Calu3 (cell line): ENCODE measurements at regions of chr15 and their contacts with region 1.

Region 1: DNA sequence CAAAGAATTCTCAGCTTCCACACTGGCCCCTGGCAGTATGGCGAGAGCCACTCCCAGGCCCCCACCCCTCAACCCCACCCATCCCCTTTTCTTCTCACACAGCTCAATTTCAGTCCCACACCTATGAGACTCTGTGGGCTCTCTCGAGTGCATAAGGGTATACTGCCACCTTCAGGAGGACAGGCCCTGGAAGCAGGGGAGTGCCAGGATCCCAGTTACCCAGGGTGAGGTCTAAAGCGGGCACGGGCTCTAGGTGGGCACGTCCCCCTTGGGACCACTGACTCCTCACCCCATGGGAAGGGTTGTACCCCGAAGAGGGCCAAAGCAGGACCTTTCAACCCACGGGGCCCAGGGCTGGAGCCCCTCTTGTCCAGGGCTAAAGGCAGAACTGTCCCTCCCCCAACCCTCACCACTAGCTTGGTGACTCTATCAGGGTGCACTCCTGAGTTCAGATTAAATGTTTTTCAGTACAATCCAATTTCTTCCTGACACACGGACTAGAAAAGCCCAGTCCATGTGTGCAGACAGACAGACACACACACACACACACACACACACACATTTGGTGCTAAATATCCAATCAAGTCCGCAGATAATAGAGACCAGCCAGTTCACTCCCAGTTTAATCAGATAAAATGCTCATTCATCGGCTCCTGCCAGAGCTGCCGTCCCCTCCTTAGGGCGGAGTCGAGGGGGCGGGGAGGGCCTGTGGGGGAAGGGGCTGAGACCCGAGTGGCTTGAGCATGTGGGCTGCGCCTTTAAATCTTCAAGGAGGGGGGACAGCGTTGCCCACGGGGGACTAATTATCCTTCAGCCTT is 59.4 kb downstream of the CYP11A1 start:
- DNase-seq: peak; percentile 81
- H3K4me3 Mint-ChIP-seq: no peak overlapping the region
- H3K27ac Mint-ChIP-seq: no peak overlapping the region
- H3K4me1 Mint-ChIP-seq: peaks cover 9% of the 10 kb centered on the region
- H3K27me3 Mint-ChIP-seq: peaks cover 100% of the 10 kb centered on the region
- CTCF ChIP-seq: peak; percentile 71

Region 2: GRCh38 chr15:74053941-74054529 is 254.0 kb before region 1 on chr15:
- CTCF ChIA-PET with region 1: interaction called, 14 read pairs
- intact Hi-C with region 1: loop called (anchors 5 kb)
- DNase-seq: peak; percentile 83
- H3K4me3 Mint-ChIP-seq: no peak overlapping the region
- H3K27ac Mint-ChIP-seq: no peak overlapping the region
- H3K4me1 Mint-ChIP-seq: peaks cover 21% of the 10 kb centered on the region
- H3K27me3 Mint-ChIP-seq: peaks cover 17% of the 10 kb centered on the region
- CTCF ChIP-seq: peak; percentile 80

Region 3: DNA sequence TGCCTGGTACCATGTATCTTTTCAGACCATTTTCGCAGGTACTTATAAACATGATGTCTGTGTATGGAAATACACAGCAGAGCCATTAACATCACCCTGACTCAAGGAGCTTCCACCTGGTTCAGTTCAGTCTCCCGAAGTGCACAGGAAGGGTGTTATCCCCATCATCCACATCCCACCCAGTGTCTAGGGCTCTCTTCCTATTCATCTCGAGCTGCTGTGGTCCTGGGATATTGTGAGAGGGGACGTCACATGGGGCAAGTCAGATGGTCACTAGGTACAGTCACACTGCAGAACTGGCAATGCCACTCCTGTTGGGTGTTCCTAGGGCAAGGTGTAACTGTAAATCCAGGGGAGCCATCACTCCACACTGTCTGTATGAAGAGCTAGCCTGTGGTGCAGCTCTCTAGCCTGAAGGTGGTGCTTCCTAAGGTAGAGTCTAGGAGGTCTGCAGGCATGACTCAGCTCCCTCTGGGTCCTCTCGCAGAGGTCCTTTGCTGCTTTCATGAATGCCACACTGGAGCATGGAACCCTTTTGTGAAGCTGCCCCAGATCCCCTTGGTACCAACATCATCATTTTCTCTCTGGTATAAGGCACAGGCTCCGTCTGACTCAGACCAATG is 163.8 kb before region 1 on chr15:
- CTCF ChIA-PET with region 1: interaction called, 12 read pairs
- intact Hi-C with region 1: no loop called
- DNase-seq: peak; percentile 38
- H3K4me3 Mint-ChIP-seq: no peak overlapping the region
- H3K27ac Mint-ChIP-seq: no peak overlapping the region
- H3K4me1 Mint-ChIP-seq: no peaks in the 10 kb centered on the region
- H3K27me3 Mint-ChIP-seq: peaks cover 23% of the 10 kb centered on the region
- CTCF ChIP-seq: peak; percentile 33

Region 4: GRCh38 chr15:74202452-74203428 is 105.3 kb before region 1 on chr15 and contains the start of gene STRA6:
- CTCF ChIA-PET with region 1: interaction called, 13 read pairs
- intact Hi-C with region 1: no loop called
- DNase-seq: peak; percentile 77
- H3K4me3 Mint-ChIP-seq: peak within 1 kb of the TSS; percentile 56
- H3K27ac Mint-ChIP-seq: peak within 1 kb of the TSS; percentile 93
- H3K4me1 Mint-ChIP-seq: peaks cover 58% of the 10 kb centered on the region
- H3K27me3 Mint-ChIP-seq: no peaks in the 10 kb centered on the region
- CTCF ChIP-seq: no peak
- total RNA-seq, gene STRA6: 5.9 and 8.4 TPM in 2 replicates

Region 5: DNA sequence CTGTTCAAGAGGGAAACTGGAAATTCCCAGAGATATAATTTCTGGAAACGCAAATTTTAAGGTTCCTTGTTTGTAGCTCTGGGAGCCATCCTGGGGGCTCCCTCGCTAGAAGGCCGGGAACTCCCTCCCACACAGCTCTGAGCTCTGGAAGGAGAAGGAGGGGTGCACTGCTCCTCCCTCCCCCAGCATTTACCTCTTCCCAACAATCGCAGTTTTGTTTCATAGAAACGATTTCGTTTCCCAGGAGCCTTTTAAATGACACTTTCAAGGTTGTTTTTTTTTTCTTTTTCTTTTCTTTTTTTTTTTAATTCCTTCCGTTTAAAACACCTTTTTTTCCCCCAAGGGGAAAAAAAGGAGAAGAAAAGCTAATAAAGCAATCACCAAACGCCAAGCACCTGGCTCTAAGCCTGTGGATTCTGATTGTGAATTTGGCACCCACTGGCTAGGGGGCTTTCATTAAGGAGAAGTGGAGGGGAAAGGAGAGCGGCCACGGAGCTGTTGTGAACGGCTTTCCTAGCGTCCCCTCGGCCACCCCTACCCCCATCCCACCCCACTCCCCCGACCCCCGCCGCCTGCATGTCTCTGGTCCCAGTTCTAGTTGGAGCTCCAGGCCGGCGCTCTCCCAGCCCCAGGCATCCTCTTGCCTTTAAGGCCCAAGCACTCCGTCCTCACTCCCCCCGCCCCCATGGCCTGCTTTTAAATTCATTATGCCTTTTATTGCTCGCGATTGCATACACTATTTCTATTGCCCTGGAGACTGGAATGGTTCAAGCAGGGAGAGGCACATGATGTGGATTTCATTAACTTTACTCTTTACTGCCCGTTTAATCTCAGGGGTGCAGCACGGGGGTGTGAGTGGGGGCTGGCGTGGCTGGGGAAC is 85.6 kb before region 1 on chr15:
- CTCF ChIA-PET with region 1: no interaction called
- intact Hi-C with region 1: no loop called
- DNase-seq: no peak
- H3K4me3 Mint-ChIP-seq: no peak overlapping the region
- H3K27ac Mint-ChIP-seq: no peak overlapping the region
- H3K4me1 Mint-ChIP-seq: peaks cover 38% of the 10 kb centered on the region
- H3K27me3 Mint-ChIP-seq: peaks cover 19% of the 10 kb centered on the region
- CTCF ChIP-seq: no peak

Region 6: DNA sequence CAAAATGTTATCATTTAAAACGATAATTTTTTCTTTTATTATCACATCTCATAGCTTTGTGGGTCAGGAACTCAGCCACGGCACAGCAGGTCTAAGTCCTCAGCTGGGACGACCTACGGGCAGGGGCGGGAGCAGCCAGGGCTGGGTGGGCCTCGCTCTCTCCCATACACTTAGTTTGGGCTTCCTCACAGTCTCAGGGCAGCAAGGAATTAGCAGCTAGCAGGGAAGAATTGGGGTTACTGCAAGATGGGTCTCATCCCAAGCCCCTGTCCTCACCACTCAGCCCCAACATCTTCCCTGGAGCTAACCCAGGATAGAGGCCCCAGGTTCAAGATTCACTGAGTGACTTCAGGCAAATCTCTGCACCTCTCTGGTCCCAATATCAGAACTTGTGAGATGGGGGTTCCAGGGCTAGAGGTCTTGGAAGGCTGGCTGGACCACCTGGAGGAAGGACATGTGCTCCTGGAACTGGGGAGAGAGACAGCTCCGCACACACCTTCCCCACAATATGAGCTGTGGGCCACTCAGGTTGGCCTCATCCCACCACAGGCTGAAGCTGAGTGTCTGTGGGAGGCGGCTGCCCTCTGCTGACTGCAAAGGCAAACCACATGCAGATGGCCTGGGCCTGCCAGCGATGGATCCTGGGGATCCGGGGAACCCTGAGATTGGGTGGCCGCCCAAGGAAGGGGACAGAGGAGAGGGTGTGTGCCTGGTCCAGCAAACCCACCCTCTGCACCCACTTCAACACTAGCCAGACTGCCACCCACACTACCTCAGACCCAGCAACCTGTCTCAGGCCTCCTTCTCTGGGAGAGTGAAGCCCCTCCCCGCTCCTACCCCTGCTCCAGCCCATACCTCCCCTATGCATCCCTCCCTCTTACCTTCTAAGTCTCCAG is 14.4 kb after region 1 on chr15:
- CTCF ChIA-PET with region 1: interaction called, 29 read pairs
- intact Hi-C with region 1: no loop called
- DNase-seq: peak; percentile 82
- H3K4me3 Mint-ChIP-seq: no peak overlapping the region
- H3K27ac Mint-ChIP-seq: no peak overlapping the region
- H3K4me1 Mint-ChIP-seq: peaks cover 8% of the 10 kb centered on the region
- H3K27me3 Mint-ChIP-seq: peaks cover 33% of the 10 kb centered on the region
- CTCF ChIP-seq: peak; percentile 88

Region 7: GRCh38 chr15:74531144-74531811 is 223.2 kb after region 1 on chr15:
- CTCF ChIA-PET with region 1: no interaction called
- intact Hi-C with region 1: no loop called
- DNase-seq: peak; percentile 50
- H3K4me3 Mint-ChIP-seq: peak overlapping the region; percentile 12
- H3K27ac Mint-ChIP-seq: peak overlapping the region; percentile 29
- H3K4me1 Mint-ChIP-seq: peaks cover 24% of the 10 kb centered on the region
- H3K27me3 Mint-ChIP-seq: no peaks in the 10 kb centered on the region
- CTCF ChIP-seq: no peak